Gastrocnemius medialis (tissue), 4 donors: ENCODE measurements at regions of chr13 and their contacts with region 1.

Region 1: GRCh38 chr13:30465585-30466357 is at the start of gene HMGB1:
- DNase-seq: peak; percentile 99
- ATAC-seq: peak; percentile 90 to 94
- H3K4me3 ChIP-seq: peak within 1 kb of the TSS; percentile 60 to 74 (median 68)
- H3K27ac ChIP-seq: peak within 1 kb of the TSS; percentile 92 to 98 (median 96)
- H3K4me1 ChIP-seq: peaks cover 29 to 30% of the 10 kb centered on the region in 2 donors
- H3K27me3 ChIP-seq: no peaks in the 10 kb centered on the region
- CTCF ChIP-seq: peak in 2 of 5 experiments; percentile 17 to 18
- POLR2A ChIP-seq: peak; percentile 97 to 98
- total RNA-seq, gene HMGB1: 217 to 314 (median 265) TPM

Region 2: GRCh38 chr13:29850224-29850898 is 615.4 kb before region 1 on chr13 and contains the start of gene UBL3:
- in situ Hi-C with region 1: no loop called
- intact Hi-C with region 1: loop called (anchors 1 kb)
- DNase-seq: peak; percentile 96 to 97
- ATAC-seq: peak; percentile 91 to 92
- H3K4me3 ChIP-seq: peak within 1 kb of the TSS; percentile 76 to 97 (median 95)
- H3K27ac ChIP-seq: peak within 1 kb of the TSS; percentile 98 to 100 (median 100)
- H3K4me1 ChIP-seq: peaks cover 28 to 30% of the 10 kb centered on the region in 2 donors
- H3K27me3 ChIP-seq: no peaks in the 10 kb centered on the region
- CTCF ChIP-seq: no peak
- POLR2A ChIP-seq: peak; percentile 86 to 94
- total RNA-seq, gene UBL3: 27.8 to 32.4 (median 29.4) TPM

Region 3: GRCh38 chr13:30306762-30307193 is 159.0 kb before region 1 on chr13:
- in situ Hi-C with region 1: no loop called
- intact Hi-C with region 1: loop called (anchors 2 kb)
- DNase-seq: peak; percentile 86 to 88
- ATAC-seq: peak; percentile 98 to 99
- H3K4me3 ChIP-seq: peak overlapping the region; percentile 85 to 98 (median 91)
- H3K27ac ChIP-seq: peak overlapping the region; percentile 87 to 96 (median 90)
- H3K4me1 ChIP-seq: peaks cover 15 to 16% of the 10 kb centered on the region in 2 donors
- H3K27me3 ChIP-seq: no peaks in the 10 kb centered on the region
- CTCF ChIP-seq: no peak
- POLR2A ChIP-seq: no peak

Region 4: DNA sequence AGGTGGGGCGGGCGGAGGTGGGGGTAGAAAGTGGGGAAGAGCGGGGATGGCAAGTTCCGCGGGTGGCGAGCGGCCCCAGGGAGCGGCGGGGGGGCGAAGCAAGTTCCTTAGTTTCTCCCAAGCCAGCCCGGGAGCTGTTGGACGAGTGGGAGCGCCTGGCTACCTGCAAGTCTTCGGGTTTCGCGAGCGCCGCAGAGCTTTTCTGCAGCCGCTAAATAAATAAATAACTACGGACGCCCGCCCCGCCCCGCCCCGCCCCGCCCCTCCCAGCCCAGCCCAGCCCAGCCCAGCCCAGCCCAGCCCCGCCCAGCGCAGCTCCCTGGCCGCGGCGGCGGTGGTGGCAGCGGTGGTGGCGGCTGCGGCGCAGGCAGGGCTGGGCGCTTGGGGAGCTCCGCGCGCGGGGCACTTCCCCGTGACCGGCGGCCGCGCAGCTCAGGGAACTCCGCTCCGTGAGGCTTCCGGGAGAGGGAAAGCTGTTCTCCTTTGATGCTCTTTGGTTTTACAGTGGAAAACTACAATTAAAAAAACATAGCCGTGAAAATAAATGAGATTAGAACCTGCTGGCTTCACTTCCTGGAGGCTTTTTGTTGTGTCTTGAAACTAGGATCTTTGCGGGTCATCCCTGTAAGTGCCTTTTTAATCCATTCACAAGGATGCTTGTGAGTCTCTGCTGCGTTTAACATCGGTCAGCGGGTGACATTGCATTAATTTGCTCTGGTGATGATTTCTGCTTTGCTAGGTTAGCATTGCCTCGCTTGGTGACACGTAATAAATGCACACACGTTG is 43.5 kb before region 1 on chr13 and contains the start of gene UBE2L5:
- in situ Hi-C with region 1: no loop called
- intact Hi-C with region 1: loop called (anchors 1 kb)
- DNase-seq: peak; percentile 65 to 76
- ATAC-seq: peak; percentile 64 to 69
- H3K4me3 ChIP-seq: peak within 1 kb of the TSS; percentile 64 to 95 (median 77)
- H3K27ac ChIP-seq: peak within 1 kb of the TSS; percentile 95 to 99 (median 98)
- H3K4me1 ChIP-seq: peaks cover 9 to 10% of the 10 kb centered on the region in 2 donors
- H3K27me3 ChIP-seq: no peaks in the 10 kb centered on the region
- CTCF ChIP-seq: no peak
- POLR2A ChIP-seq: peak; percentile 70 to 77
- total RNA-seq, gene UBE2L5: not detected

Region 5: DNA sequence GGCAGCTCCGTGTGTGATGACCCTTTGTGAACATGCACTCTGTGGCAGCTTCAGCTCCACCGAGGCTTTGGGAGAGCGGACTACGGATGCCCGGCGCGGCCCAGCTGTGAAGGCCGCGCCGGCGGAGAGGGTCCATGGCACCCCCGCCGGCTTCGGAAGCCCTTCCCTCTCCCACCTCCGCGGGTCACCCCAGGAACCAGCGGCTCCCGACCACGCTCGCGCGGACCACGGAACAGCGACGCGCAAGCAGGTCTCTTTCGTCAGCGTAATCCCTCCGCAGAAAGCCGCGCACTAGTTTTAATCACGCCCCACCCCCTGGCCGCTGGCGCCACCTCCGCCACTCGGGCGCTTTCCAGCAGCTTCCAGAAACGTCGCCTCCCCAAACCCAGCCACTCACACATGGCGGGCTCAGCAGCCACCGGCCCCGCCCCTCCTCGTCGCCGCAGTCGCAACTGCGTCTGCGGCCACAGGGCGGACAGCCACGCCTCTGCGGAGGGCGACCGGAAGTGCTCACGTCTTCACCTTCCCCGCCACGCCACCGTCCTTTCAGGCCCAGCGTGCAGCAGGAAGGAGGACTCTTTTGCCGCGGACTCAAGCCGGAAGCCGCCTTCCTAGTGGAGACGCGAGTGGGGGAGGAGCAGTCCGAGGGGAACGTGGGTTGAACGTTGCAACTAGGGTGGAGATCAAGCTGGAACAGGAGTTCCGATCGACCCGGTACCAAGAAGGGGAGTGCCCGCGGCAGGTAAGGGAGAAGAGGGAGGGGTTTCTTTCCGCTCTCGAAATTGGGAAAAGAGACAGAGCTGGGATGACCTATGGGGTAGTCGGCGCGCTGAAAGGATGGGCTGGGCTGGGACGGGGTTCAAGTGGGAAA is 151.8 kb after region 1 on chr13 and contains the start of gene USPL1:
- in situ Hi-C with region 1: loop called (anchors 10 kb)
- intact Hi-C with region 1: loop called (anchors 1 kb)
- DNase-seq: peak; percentile 96 to 98
- ATAC-seq: peak; percentile 84 to 87
- H3K4me3 ChIP-seq: peak within 1 kb of the TSS; percentile 81 to 91 (median 86)
- H3K27ac ChIP-seq: peak within 1 kb of the TSS; percentile 91 to 100 (median 98)
- H3K4me1 ChIP-seq: peaks cover 33 to 40% of the 10 kb centered on the region in 2 donors
- H3K27me3 ChIP-seq: no peaks in the 10 kb centered on the region
- CTCF ChIP-seq: peak; percentile 34 to 63 (median 51)
- POLR2A ChIP-seq: peak; percentile 93 to 96
- total RNA-seq, gene USPL1: 14.2 to 18.4 (median 15.6) TPM

Region 6: DNA sequence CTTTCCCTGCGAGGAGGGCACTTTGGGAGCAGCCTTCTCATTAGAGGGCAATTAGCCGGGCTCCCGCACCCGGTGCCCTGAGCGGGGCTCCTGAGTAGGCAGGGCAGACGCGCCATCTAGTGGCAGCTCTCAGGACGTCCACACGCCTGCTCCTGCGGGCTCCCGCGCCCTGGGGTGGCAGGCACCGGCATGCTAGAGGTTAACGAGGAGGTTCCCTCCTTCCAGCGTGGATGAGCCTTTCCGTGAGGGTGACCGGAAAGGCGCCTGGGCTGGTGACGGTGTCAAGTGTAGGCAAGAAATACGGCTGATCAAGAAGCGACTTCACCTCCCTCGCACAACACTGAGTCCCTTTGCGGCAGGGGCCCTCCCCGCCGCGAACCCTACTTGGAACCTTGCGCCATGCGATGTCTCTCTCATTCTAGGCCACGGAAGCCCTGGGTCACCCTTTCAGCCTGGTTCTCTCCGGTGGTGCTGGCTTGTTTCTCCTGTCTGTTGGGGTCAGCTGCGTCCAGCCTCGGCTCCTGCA is 337.2 kb after region 1 on chr13:
- in situ Hi-C with region 1: no loop called
- intact Hi-C with region 1: loop called (anchors 5 kb)
- DNase-seq: peak; percentile 64 to 78
- ATAC-seq: peak; percentile 85 to 87
- H3K4me3 ChIP-seq: peak overlapping the region; percentile 49 to 72 (median 59)
- H3K27ac ChIP-seq: peak overlapping the region; percentile 25 to 79 (median 62)
- H3K4me1 ChIP-seq: peaks cover 0 to 16% of the 10 kb centered on the region in 2 donors
- H3K27me3 ChIP-seq: no peaks in the 10 kb centered on the region
- CTCF ChIP-seq: peak; percentile 88 to 96 (median 95)
- POLR2A ChIP-seq: no peak